ENCODE measurements at regions of chr12 and their contacts with region 1.

Region 1: DNA sequence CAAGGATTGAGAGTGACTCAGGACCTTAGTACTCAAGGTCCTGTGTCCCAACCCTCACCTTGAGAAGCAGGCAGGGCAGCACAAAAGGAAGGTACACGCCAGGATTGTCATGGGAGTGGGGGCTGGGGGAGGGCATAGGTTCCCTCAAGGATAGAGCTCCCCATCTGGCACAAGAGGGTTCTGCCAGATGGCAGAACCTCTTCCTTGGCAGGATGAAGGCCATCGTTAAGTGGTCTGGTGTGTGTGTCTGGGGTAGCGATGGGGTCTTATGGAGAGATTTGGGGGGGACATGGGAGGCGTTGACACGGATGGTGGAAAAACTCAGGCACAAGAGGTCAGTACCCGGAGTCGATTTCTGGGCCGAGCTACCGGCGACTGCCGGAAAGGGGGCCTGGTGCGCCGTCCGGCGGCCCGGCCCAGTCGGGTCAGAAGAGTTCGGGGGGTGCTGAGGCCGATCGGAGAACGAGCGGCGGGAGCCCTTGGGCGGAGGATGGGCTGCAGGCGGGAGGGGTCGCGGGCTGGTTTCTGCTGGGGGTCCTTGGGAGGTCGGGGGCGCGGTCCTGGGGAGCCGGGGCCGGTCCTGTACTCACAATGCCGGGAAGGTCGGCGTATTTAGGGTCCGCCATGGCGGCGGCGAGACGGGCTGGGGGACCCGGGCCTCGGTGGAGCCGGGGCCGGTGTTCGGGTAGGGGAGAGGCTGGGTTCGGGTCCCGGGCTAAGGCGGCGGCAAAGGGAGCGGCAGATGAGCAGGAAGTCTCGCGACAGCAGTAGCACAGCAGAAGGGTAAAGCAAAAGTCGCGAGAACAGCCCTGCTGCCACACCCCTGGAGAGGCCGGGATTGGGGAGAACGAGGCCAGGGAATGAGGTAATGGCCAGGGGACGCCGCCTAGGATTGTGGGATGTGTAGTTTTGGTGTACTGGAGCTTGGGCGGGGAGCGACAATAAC is at the start of gene DCTN2:
- DNase-seq: peak; percentile 84 to 98 (median 96)
- H3K4me3 ChIP-seq: peak within 1 kb of the TSS; percentile 57 to 99 (median 91)
- H3K27ac ChIP-seq: peak within 1 kb of the TSS in 54 of 59 donors; percentile 33 to 95 (median 80)
- H3K27me3 ChIP-seq: no peaks in the 10 kb centered on the region
- CTCF ChIP-seq: peak in 32 of 56 donors; percentile 9 to 54 (median 36)
- total RNA-seq, gene DCTN2: 106 to 224 (median 181) TPM

Region 2: GRCh38 chr12:57309420-57309819 is 237.3 kb before region 1 on chr12:
- intact Hi-C with region 1: no loop called
- DNase-seq: no peak
- H3K4me3 ChIP-seq: no peak overlapping the region
- H3K27ac ChIP-seq: peak overlapping the region in 56 of 59 donors; percentile 3 to 87 (median 70)
- H3K27me3 ChIP-seq: no peaks in the 10 kb centered on the region
- CTCF ChIP-seq: no peak

Region 3: DNA sequence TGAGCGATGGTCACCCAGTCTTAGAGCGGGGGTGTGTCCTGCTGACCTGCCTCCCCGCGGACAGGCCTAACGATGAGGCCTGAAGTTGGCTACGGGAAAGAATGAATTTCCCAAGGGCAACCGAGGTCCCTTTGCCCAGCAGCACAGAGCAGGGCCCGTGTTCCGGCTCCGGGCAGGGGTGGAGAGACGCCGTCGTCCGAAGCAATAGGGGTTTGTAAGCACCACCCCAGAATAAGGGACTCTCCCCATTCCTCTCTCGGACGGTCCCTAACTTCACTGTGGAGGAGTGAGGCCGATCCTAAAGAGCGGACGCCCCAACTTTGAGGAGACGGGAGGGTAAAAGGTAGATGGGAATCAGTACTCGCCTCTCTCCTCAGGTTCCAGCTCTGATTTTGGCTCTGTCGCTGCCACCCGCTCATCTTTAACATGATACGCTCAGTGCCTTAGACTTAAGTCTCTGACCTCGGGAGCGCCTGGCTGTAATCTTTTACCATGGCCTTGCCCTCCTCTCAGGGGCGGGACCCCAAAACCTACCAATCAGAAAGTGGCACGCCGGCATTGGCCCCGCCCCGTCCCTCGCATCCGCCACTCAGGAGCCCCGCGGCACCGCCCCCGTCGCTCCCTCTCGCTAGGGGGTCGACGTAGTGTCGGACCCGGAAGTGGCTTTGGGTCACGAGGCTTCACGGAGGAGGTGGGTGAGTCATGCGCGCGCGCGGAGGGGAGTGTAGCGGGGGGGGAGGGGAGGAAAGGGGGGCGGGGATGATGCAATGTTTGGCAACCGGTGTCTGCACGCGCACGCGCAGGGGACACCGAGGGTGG is 26.4 kb before region 1 on chr12 and contains the start of gene DDIT3:
- intact Hi-C with region 1: loop called (anchors 2 kb)
- DNase-seq: peak; percentile 97 to 99 (median 99)
- H3K4me3 ChIP-seq: peak within 1 kb of the TSS; percentile 61 to 100 (median 96)
- H3K27ac ChIP-seq: peak within 1 kb of the TSS; percentile 92 to 100 (median 100)
- H3K27me3 ChIP-seq: no peaks in the 10 kb centered on the region
- CTCF ChIP-seq: peak in 10 of 56 donors; percentile 4 to 33 (median 14)
- total RNA-seq, gene DDIT3: 17.0 to 102 (median 32.4) TPM

Region 4: DNA sequence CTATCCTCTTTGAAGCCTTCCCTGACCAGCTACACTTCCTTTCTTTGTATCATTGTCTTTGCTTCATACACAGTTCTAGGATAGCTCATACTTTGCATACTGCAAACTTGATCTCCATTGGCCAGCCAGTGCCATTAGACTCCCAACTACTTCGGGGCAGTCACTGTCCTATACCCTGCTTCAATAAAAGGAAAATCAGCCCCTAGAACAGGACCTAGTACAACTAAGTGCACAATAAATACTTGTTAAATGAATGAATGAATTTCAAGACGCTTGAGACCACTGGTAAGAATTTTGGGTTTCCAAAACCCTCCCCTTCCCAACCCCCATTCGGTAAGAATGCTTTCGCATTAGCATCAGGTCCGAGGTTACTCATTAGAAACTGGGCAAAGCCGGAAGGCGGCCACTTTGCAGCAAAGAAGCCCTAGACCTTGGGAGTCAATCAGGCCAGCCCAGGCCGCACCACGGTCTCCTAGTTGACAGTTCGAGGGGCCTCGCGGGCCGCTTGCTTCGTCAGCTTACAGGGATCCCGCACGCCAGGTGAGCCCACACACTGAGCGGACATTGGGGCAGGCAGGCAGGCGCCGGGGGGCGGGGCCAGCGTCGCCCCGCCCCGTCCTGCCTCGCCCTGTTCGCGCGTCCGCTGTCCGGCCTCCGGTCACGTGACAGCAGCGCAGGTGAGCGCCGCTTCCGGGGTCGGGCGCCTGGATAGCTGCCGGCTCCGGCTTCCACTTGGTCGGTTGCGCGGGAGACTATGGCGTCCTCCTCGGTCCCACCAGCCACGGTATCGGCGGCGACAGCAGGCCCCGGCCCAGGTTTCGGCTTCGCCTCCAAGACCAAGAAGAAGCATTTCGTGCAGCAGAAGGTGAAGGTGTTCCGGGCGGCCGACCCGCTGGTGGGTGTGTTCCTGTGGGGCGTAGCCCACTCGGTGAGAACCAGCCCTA is 44.1 kb after region 1 on chr12 and contains the start of gene PIP4K2C:
- intact Hi-C with region 1: loop called in 1 of 2 experiments (anchors 2 kb)
- DNase-seq: peak; percentile 69 to 91 (median 80)
- H3K4me3 ChIP-seq: peak within 1 kb of the TSS; percentile 58 to 100 (median 93)
- H3K27ac ChIP-seq: peak within 1 kb of the TSS in 57 of 59 donors; percentile 7 to 92 (median 82)
- H3K27me3 ChIP-seq: no peaks in the 10 kb centered on the region
- CTCF ChIP-seq: peak in 16 of 56 donors; percentile 3 to 45 (median 24)
- total RNA-seq, gene PIP4K2C: 37.9 to 103 (median 73.9) TPM

Region 5: GRCh38 chr12:57868851-57869268 is 322.1 kb after region 1 on chr12:
- intact Hi-C with region 1: no loop called
- DNase-seq: peak in 9 of 10 donors; percentile 61 to 85 (median 80)
- H3K4me3 ChIP-seq: peak overlapping the region in 44 of 59 donors; percentile 3 to 53 (median 24)
- H3K27ac ChIP-seq: peak overlapping the region; percentile 9 to 92 (median 83)
- H3K27me3 ChIP-seq: no peaks in the 10 kb centered on the region
- CTCF ChIP-seq: peak in 5 of 56 donors; percentile 6 to 31 (median 14)

Measured in dorsolateral prefrontal cortex (tissue), 120 donors.